Activated naive CD4-positive, alpha-beta T cell treated with anti-CD3 and anti-CD28 coated beads, Interleukin-2, amount 10 ng/mL, durations not matched to agents 7 days and 5 days (primary cell): ENCODE measurements at regions of chr6 and their contacts with region 1.

Region 1: DNA sequence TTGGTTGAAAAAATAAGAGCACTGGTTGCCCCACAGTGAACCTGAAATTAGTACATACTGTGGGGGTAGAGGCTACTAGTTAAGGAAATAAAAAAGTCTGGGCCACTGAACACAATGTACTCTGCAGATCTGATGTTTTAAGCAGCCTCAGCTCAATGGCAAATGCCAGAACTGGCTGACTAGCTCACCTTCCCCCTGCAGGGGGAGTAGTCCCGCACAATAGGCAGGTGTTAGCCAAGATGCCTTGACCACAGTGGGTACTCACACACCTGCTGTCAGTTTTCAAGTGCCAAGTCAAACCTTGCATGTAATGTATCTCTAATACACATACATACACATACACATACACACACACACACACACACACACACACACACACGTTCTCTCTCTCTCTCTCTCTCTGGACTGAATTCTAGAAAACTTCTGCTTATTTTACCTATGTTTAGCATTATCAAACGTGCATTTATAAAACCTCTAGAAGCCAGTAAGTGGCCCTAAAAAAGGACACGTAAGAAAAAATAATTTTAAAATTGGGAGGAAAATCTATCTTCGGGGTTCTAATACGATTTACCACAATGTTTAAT is 36.1 kb downstream of the GMDS start:
- DNase-seq: peak; percentile 61
- H3K4me3 Mint-ChIP-seq: no peak overlapping the region
- H3K27ac Mint-ChIP-seq: no peak overlapping the region
- H3K4me1 Mint-ChIP-seq: no peaks in the 10 kb centered on the region
- H3K27me3 Mint-ChIP-seq: no peaks in the 10 kb centered on the region

Region 2: DNA sequence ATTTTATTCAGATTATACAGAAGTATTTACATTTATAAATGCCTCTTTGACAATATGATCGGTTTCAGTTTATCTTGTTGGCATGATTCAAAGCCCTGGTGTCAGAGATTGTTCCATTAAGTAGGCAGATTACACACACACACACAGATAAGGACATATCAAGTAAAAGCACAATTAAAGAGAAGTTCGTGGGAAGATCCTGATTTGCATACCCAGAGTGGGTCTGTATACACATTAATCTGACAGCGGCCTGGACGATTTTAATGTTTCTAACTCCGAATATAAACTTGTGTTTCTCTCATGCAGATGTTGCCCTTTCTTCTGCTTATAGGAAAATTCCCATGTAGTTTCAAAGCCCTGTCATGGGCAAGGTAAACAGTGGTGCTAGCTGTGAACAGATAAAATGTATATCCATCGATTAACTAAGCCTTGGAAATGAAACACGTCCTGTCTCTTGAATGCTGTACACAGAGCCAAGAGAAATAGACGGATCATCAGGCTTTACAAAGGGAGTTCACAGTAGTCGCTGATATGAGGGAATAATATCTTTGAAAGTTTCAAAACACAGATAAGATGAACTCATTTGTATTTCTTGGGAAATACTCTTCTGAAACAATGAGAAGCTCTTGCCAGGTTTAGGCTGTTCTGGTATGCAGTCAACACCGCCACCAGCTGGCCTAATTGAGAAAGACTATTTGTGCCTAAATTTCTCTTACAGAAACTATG is 144.3 kb after region 1 on chr6:
- CTCF ChIA-PET with region 1: interaction called, 33 read pairs
- DNase-seq: peak; percentile 75
- H3K4me3 Mint-ChIP-seq: no peak overlapping the region
- H3K27ac Mint-ChIP-seq: no peak overlapping the region
- H3K4me1 Mint-ChIP-seq: no peaks in the 10 kb centered on the region
- H3K27me3 Mint-ChIP-seq: no peaks in the 10 kb centered on the region

Region 3: DNA sequence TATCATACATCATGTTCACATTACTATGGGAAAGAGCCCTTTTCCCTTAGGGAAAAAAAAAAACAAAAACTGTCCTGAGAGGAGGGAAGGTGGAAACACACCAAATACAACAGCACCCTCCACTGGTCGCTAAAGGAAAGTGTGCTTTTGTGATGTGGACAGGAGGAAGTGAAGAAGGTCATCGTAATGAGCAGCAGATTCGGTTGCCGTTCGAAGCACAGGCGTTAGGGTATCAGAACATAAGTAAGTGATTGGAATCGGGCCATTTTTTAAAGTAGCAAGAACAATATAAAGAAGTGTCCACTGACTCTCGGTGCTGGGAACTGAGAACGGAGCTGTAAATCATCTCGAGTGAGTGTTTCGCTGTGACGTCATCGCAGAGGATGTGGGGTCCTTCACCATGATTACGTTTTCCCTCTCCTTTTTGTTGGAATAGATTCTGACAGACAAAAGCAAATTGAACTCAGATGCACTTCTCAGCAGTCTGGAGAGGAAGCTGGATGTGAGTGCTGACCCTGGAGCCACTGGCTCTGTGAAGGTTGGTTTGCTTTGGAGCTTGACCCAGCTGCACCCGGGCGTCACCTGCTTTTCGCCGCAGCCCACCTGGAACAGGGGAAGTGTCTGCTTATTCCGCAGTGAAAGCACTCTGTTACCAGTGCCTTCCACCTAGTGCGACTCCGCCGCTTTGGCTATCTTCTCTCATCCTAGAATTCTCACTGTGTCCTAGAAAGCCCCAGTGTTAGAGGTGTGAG is 239.7 kb after region 1 on chr6:
- CTCF ChIA-PET with region 1: interaction called, 21 read pairs
- DNase-seq: peak; percentile 34
- H3K4me3 Mint-ChIP-seq: peak overlapping the region; percentile 2
- H3K27ac Mint-ChIP-seq: no peak overlapping the region
- H3K4me1 Mint-ChIP-seq: peaks cover 3% of the 10 kb centered on the region
- H3K27me3 Mint-ChIP-seq: peaks cover 4% of the 10 kb centered on the region